Heart left ventricle (tissue), 16 donors: ENCODE measurements at regions of chr15 and their contacts with region 1.

Region 1: DNA sequence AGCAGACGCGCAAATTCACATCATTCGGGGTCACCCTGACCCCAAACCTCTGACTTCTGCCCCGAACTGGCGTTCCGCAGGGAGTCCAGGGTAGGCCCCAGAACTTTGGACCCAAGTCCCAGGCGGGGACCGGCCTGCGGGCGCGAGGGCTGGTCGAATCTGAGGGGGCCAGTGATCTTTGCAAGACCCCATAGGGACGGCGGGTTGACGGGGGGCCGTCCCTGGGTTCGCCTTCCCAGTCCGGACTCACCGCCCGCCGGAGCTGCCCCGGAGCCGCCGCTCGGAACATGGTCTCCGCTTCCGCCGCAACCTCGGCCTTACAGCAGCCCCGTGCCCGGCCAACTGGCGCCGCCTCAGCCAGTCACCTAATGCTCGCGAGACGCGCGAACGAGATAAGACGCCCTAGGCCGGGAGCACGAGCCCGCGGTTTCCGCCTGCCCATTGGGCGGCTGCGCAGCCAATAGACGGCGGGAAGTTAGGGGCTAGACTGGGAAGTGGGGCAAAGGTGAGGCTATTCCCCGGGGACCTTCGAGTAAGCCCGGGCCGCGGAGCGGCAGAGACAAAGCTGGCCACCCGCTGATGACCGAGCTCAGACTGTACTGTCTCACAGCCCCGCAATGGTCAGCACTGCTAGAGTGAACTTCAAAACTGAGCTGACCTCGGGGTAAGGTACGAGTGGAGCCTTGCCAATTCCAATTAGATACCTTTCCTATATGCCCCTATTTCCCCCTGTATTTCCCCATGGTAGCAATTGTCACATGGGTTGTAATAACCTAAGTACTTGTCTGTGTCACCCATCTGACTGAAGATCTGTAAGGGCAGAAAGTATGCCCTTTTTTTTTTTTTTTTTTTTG is at the start of gene ETFA:
- DNase-seq: peak; percentile 97 to 99 (median 99)
- ATAC-seq: peak; percentile 97 to 99 (median 99)
- H3K4me3 ChIP-seq: peak within 1 kb of the TSS; percentile 67 to 97 (median 84)
- H3K27ac ChIP-seq: peak within 1 kb of the TSS; percentile 69 to 94 (median 90)
- H3K4me1 ChIP-seq: peaks cover 0 to 44% (median 27%) of the 10 kb centered on the region in 12 donors
- H3K27me3 ChIP-seq: no peaks in the 10 kb centered on the region
- CTCF ChIP-seq: no peak
- POLR2A ChIP-seq: peak; percentile 74 to 98
- total RNA-seq, gene ETFA: 244 to 536 (median 369) TPM

Region 2: GRCh38 chr15:76190834-76191538 is 120.3 kb before region 1 on chr15:
- intact Hi-C with region 1: loop called in 1 of 10 experiments (anchors 10 kb)
- DNase-seq: peak; percentile 70 to 86 (median 80)
- ATAC-seq: peak; percentile 75 to 91 (median 86)
- H3K4me3 ChIP-seq: peak overlapping the region in 2 of 12 donors; percentile 15 to 21
- H3K27ac ChIP-seq: no peak overlapping the region
- H3K4me1 ChIP-seq: peaks cover 0 to 17% (median 8%) of the 10 kb centered on the region in 12 donors
- H3K27me3 ChIP-seq: peaks cover 0 to 58% (median 5%) of the 10 kb centered on the region in 9 donors
- CTCF ChIP-seq: peak; percentile 73 to 92 (median 86)
- POLR2A ChIP-seq: no peak